Activated T-helper 1 cell treated with anti-CD3 and anti-CD28 coated beads, Interleukin-12 subunit alpha, Interleukin-12 subunit beta, Interleukin-2, Interleukin-4 antibody, amounts not matched to agents 30 ng/mL and 10 ng/mL and 1 ng/mL, durations not matched to agents 14 hours and 24 hours and 36 hours (primary cell): ENCODE measurements at regions of chr13 and their contacts with region 1.

Region 1: GRCh38 chr13:44259045-44260027 is 114.3 kb upstream of the SERP2 start:
- DNase-seq: peak; percentile 62
- H3K4me3 Mint-ChIP-seq: peak overlapping the region; percentile 75
- H3K27ac Mint-ChIP-seq: peak overlapping the region; percentile 83
- H3K4me1 Mint-ChIP-seq: peaks cover 14% of the 10 kb centered on the region
- H3K27me3 Mint-ChIP-seq: peaks cover 4% of the 10 kb centered on the region

Region 2: GRCh38 chr13:42991892-42992763 is 1267.2 kb before region 1 on chr13 and contains the start of gene EPSTI1:
- intact Hi-C with region 1: loop called (anchors 2 kb)
- DNase-seq: peak; percentile 80
- H3K4me3 Mint-ChIP-seq: peak within 1 kb of the TSS; percentile 95
- H3K27ac Mint-ChIP-seq: peak within 1 kb of the TSS; percentile 97
- H3K4me1 Mint-ChIP-seq: peaks cover 76% of the 10 kb centered on the region
- H3K27me3 Mint-ChIP-seq: no peaks in the 10 kb centered on the region
- total RNA-seq, gene EPSTI1: 18.6 and 19.3 TPM in 2 replicates

Region 3: DNA sequence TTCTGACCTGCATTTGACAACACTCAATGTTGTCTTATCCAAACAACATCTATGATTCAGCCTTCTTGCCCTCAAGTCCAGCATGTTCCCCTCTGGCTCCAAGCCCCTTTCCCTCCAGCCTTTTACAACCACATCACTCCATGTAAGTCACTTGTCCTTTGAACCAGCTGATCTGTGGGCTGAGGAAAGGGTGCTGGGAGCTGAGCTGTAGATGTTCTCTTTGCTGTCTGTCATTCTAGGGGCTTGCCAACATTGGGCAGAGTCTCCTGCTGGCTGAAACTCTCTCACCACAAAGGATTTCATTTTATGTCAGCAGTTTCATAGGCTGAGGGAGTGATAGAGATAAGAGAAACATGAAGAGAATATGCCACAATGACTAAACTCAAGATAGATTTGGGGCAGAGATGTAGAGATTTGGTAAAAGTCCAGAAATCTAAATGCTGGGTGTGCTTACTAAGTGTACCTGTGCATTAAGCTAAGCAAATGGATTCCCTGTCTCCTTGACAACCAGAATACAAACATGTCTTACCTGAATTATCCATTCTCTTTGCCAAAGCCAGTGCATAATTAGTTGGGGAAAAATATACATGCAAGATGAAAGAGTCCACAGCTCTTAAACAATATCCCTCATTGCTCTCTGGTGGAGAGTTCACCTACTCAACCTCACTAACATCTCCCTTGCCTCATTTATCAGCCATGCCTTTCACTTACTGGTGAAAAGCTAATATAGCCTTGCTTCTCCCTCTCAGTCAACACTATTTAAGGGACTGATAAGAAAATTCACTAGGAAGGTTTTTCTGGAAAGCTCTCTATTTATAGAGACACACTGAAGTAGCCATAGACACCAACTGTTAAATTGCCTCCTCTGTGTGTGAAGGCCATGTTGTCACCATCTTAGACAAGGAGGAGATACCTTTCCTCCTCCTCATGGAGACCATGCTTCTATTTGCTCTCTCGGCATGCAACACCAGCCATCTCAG is 61.3 kb before region 1 on chr13:
- intact Hi-C with region 1: loop called (anchors 1 kb)
- DNase-seq: peak; percentile 50
- H3K4me3 Mint-ChIP-seq: no peak overlapping the region
- H3K27ac Mint-ChIP-seq: peak overlapping the region; percentile 37
- H3K4me1 Mint-ChIP-seq: peaks cover 47% of the 10 kb centered on the region
- H3K27me3 Mint-ChIP-seq: peaks cover 32% of the 10 kb centered on the region

Region 4: GRCh38 chr13:44274452-44275205 is 15.3 kb after region 1 on chr13:
- intact Hi-C with region 1: loop called (anchors 1 kb)
- DNase-seq: peak; percentile 22
- H3K4me3 Mint-ChIP-seq: peak overlapping the region; percentile 56
- H3K27ac Mint-ChIP-seq: peak overlapping the region; percentile 85
- H3K4me1 Mint-ChIP-seq: peaks cover 60% of the 10 kb centered on the region
- H3K27me3 Mint-ChIP-seq: no peaks in the 10 kb centered on the region

Region 5: DNA sequence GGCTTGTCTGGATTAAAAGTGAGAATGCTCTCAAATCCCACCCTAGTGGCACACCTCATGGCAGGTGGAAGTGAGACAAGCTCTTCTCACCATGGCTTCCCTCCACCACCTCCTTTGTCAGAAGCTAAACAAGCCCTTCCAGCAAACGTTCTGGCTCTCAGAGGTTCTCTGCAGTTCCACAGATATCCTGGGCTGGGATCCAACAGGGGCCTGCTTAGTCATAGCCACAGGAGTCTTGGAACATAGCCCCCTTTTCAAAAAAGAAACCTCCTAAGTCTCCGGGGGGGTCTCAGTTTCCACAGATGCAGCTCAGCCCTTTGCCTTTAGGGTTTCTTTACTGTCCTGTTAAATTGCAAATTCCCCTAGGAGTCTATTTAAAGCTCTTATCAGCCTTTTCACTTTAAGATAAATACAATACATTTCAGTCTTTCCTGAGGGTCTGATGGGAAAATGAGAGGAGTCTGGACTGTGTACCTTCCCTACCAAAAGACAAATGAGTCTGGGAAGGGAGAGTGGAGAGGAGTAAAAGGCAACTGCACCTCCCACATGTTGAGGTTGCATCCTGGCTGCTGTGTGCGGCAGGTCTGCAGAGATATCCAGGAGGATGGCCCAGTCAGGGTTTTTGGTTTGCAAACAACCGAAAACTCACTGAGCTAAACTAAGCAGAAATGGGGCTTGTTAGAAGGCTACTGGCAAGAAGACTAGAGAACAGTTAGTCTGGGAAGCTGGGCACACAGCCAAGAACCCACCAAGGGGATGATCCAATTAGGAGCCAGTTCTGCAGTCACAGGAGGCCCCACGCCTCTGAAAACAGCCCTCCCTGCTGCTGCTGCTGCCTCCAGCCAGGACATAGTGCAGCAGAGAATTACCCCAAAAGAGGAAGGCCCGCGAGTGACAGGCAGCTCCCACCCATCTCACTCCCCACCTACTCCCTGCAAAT is 72.8 kb after region 1 on chr13:
- intact Hi-C with region 1: loop called (anchors 1 kb)
- DNase-seq: no peak
- H3K4me3 Mint-ChIP-seq: no peak overlapping the region
- H3K27ac Mint-ChIP-seq: peak overlapping the region; percentile 9
- H3K4me1 Mint-ChIP-seq: peaks cover 7% of the 10 kb centered on the region
- H3K27me3 Mint-ChIP-seq: peaks cover 1% of the 10 kb centered on the region

Region 6: GRCh38 chr13:45055198-45055901 is 796.0 kb after region 1 on chr13:
- intact Hi-C with region 1: loop called (anchors 5 kb)
- DNase-seq: peak; percentile 3
- H3K4me3 Mint-ChIP-seq: no peak overlapping the region
- H3K27ac Mint-ChIP-seq: peak overlapping the region; percentile 4
- H3K4me1 Mint-ChIP-seq: peaks cover 20% of the 10 kb centered on the region
- H3K27me3 Mint-ChIP-seq: peaks cover 51% of the 10 kb centered on the region

Region 7: GRCh38 chr13:45194081-45194939 is 935.0 kb after region 1 on chr13:
- intact Hi-C with region 1: no loop called
- DNase-seq: no peak
- H3K4me3 Mint-ChIP-seq: no peak overlapping the region
- H3K27ac Mint-ChIP-seq: no peak overlapping the region
- H3K4me1 Mint-ChIP-seq: peaks cover 22% of the 10 kb centered on the region
- H3K27me3 Mint-ChIP-seq: no peaks in the 10 kb centered on the region